ENCODE measurements at regions of chr5 and their contacts with region 1.

Region 1: GRCh38 chr5:10452768-10453331 is 11.2 kb downstream of the ROPN1L start:
- DNase-seq: no peak

Region 2: DNA sequence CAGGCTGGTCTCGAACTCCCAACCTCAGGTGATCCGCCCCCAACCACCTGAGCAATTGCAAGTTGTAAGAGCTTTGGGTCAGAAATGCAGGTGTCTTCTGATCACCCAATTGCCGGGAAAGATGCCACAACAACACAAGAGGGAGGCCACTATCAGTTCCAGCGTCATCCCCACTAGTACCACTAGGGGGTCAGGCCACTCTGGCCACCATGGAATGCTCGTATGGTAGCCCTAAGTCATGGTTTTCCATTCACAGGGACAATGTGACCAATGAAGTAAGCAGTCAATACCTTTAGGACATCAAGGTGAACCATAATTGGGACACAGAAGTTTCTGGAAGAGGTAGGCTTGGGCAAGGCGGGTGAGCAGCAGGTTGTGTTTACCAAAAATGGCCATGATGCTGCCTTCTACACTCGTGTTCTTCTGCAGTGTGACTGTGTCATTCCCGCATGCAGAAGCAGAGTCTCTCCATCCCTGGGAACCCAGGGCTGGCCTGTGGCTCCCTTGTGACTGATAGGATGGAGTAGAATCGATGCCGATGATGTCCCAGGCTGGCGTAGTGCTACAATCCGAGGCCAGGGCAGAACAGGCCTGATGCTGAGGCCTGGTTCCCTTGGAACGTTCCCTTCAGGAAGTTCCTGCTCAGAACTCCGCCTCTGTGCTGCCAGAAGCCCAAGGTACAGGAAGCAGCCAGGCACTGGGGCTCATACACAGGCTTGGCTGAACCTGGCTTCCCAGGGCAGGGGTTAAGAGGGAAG is 68.8 kb after region 1 on chr5:
- intact Hi-C with region 1: no loop called
- DNase-seq: no peak

Region 3: DNA sequence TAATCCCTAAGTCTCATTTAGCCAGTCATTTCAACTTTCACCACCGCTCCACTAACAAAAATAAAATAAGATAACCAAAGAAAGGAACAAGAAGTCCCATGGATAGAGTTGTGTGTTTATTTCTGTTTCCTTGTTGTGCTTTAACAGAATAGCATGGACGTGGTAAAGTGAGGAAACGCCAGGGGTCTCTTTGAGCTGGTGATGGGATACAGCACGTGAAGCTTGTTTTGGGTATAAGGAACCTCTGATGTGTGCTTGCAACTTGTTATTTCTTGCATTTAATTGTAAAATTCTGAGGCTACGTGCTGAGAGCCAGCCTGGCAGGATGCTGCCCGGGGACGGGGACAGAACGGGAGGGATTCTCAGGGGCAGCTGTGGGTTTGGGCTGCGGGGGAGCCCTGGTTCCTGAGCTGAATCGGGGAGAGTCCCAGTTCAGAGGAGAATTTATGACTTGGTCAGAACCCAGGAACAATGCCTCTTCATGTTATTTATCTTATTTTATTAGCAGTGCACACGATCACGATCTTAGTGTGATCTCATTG is 174.4 kb after region 1 on chr5:
- intact Hi-C with region 1: loop called (anchors 2 kb)
- DNase-seq: no peak

Region 4: GRCh38 chr5:10801931-10802659 is 349.2 kb after region 1 on chr5:
- intact Hi-C with region 1: no loop called
- DNase-seq: no peak

Measured in cardiac septum (tissue), 1 donor.